Right cardiac atrium (tissue), 5 donors: ENCODE measurements at regions of chr18 and their contacts with region 1.

Region 1: DNA sequence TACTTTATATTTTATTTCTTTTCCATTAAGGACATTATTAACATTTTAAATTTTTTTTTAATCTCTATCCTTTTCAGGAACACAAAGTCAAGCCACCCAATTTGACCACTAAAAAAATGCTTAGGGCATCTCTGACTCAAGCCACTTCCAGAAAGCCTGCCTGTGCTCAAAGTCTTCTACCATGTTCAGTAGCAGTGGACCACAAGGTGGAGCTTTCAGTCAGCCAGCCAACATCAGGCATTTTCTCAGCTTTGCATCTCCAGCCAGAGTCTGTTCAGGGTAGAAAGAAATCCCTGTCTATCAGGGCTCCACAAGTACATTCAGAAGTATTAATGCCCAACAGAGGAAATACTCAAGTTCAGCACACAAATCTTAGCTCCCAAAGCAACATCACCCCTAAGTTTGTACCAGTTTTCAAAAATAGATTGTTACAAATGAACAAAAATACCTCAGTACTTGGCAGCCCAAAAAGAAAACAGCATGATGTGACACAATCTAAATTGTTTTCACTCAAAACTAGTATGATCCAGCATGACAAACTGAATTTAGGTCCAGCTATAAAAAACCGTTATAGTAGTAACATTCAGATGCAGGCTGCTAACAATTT is 37.6 kb downstream of the C18orf63 start:
- DNase-seq: peak; percentile 54 to 64 (median 61)
- ATAC-seq: peak; percentile 90 to 91
- H3K4me3 ChIP-seq: no peak overlapping the region
- H3K27ac ChIP-seq: no peak overlapping the region
- H3K4me1 ChIP-seq: no peaks in the 10 kb centered on the region
- H3K27me3 ChIP-seq: no peaks in the 10 kb centered on the region

Region 2: GRCh38 chr18:74242438-74243096 is 110.7 kb before region 1 on chr18:
- intact Hi-C with region 1: no loop called
- DNase-seq: peak in 2 of 3 donors; percentile 30 to 67
- ATAC-seq: peak; percentile 82 to 84
- H3K4me3 ChIP-seq: peak overlapping the region; percentile 38
- H3K27ac ChIP-seq: no peak overlapping the region
- H3K4me1 ChIP-seq: no peaks in the 10 kb centered on the region
- H3K27me3 ChIP-seq: no peaks in the 10 kb centered on the region

Region 3: GRCh38 chr18:74412116-74412880 is 59.0 kb after region 1 on chr18:
- intact Hi-C with region 1: no loop called
- DNase-seq: no peak
- ATAC-seq: no peak
- H3K4me3 ChIP-seq: no peak overlapping the region
- H3K27ac ChIP-seq: no peak overlapping the region
- H3K4me1 ChIP-seq: no peaks in the 10 kb centered on the region
- H3K27me3 ChIP-seq: no peaks in the 10 kb centered on the region

Region 4: GRCh38 chr18:74476140-74476539 is 122.9 kb after region 1 on chr18:
- intact Hi-C with region 1: loop called in 2 of 4 experiments (anchors 5 to 10 kb)
- DNase-seq: peak in 1 of 3 donors; percentile 58
- ATAC-seq: no peak
- H3K4me3 ChIP-seq: no peak overlapping the region
- H3K27ac ChIP-seq: no peak overlapping the region
- H3K4me1 ChIP-seq: no peaks in the 10 kb centered on the region
- H3K27me3 ChIP-seq: no peaks in the 10 kb centered on the region

Region 5: GRCh38 chr18:74493689-74494088 is 140.4 kb after region 1 on chr18:
- intact Hi-C with region 1: loop called in 1 of 4 experiments (anchors 5 kb)
- DNase-seq: peak in 1 of 3 donors; percentile 49
- ATAC-seq: no peak
- H3K4me3 ChIP-seq: no peak overlapping the region
- H3K27ac ChIP-seq: no peak overlapping the region
- H3K4me1 ChIP-seq: peaks cover 3% of the 10 kb centered on the region
- H3K27me3 ChIP-seq: no peaks in the 10 kb centered on the region

Region 6: DNA sequence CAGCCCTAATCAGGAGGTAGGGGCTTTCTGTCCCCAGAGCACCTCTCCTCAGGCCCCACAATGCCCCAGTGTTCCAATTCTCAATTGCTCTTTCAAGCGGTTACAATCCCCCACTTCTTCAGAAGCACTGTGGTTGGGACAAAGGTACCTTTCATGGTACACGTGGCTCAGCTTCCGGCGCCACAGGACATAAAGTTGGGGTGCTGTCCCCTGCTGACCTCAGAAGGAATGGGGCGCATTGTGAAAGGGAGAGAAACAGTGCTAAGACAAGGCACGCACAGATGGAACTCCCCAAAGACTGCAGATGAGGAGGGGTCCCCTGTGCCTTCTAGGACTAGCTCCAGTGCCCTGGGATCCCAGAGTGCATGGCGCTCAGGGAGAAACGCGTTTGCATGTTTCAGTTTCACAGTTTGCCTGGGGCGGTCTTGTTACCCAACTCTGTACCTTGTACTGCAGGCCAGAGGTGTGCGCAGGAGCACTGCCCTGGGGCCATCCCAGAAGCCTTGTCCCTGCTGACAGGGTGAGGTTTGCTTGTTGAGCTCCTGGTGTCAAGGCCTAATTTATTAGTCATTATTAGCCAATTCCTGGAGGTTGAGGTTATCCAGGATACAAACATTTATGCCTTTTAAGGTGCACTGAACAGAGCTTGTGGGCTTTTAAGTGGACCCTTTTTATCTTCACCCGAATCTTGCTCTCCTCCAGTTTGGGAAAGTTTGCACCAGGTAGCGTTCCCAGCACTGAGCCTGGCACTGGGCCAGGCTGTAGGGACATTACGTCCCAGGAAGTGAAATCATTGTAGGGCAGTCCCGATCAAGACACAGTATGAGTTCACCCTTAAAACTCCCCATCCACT is 188.7 kb after region 1 on chr18:
- intact Hi-C with region 1: no loop called
- DNase-seq: no peak
- ATAC-seq: no peak
- H3K4me3 ChIP-seq: no peak overlapping the region
- H3K27ac ChIP-seq: no peak overlapping the region
- H3K4me1 ChIP-seq: peaks cover 6% of the 10 kb centered on the region
- H3K27me3 ChIP-seq: no peaks in the 10 kb centered on the region

Region 7: DNA sequence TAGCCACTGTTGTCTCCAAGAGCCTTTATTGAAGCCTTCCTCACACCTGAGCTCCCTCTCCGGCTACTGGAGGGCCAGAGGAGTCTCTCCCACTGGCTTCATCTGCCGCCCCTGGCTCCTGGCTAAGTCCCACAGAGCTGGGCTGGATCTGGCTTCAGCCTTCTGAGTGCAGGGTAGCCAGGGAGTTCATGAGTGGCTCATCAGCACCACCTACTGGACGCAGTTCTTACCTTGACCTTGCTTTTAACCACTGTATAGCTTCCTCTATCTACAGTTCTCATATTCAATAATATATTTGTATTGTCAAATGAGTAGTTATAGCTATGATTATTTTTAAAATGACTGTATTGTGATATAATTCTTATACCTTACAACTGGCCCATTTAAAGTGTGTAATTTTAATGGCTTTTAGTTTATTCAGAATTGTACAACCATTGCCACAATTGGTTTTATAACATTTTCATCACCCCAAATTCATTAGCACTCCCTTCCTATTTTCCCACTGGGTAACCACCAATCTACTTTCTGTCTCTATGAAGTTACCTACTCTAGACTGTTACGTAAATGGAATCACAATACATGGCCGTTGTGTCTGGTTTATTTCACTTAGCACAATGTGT is 198.8 kb after region 1 on chr18:
- intact Hi-C with region 1: loop called (anchors 2 to 5 kb)
- DNase-seq: peak; percentile 81 to 91 (median 87)
- ATAC-seq: peak; percentile 92 to 93
- H3K4me3 ChIP-seq: no peak overlapping the region
- H3K27ac ChIP-seq: no peak overlapping the region
- H3K4me1 ChIP-seq: peaks cover 5% of the 10 kb centered on the region
- H3K27me3 ChIP-seq: no peaks in the 10 kb centered on the region